ENCODE measurements at regions of chr4 and their contacts with region 1.

Region 1: DNA sequence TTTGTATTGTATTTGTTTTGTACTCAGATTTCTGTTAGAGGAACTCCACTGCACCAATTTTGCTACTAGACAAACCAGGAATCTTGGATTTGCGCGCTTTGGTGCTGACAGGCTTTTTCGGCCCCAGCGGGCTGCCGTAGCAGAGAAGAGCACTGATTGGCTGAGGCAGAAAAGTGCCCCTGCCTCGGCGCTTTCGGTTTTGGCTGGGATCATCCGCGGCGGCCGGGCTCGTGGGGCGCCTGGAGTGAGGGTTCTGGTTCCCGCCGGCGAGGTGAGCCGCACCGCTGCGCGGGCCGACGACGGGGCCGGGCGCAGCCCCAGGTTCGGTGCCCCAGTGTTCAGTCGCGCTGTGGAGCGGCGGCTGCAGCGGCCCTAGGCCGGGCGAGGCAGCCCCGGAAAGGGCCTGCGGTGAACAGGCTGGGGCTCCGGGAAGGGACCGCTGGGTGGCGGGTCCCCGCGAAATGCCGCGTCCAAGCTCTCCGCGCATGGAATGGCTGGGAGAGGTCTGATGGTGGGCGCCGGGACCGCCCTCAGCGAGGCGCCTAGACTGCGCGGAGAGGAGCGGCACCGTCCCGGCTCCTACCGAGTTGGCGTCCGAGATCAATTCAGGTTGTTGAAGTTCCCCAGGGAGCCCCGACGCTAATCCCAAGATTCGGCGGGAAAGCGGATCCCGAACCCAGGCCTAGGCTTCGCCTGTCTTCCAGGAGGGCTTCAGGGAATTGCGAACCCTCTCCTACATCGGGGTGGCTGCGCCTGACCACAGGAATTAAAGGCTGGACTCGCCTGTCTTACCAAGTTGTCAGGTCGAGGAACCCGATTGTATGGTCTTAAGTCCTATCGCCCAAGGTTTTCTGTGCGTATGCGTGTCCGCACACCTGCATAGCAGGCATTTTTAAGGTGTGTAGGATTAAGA is at the start of gene LSM6:
- DNase-seq: peak; percentile 92 to 94
- ATAC-seq: peak; percentile 96
- H3K4me3 ChIP-seq: peak within 1 kb of the TSS; percentile 70 to 84
- H3K27ac ChIP-seq: peak within 1 kb of the TSS; percentile 45 to 65
- H3K4me1 ChIP-seq: peaks cover 2 to 9% of the 10 kb centered on the region in 2 donors
- H3K27me3 ChIP-seq: no peaks in the 10 kb centered on the region
- total RNA-seq, gene LSM6: 19.9 to 25.8 TPM

Region 2: GRCh38 chr4:145840162-145840768 is 335.5 kb before region 1 on chr4:
- intact Hi-C with region 1: loop called in 1 of 2 experiments (anchors 10 kb)
- DNase-seq: no peak
- ATAC-seq: no peak
- H3K4me3 ChIP-seq: no peak overlapping the region
- H3K27ac ChIP-seq: no peak overlapping the region
- H3K4me1 ChIP-seq: peaks cover 0 to 2% of the 10 kb centered on the region in 2 donors
- H3K27me3 ChIP-seq: no peaks in the 10 kb centered on the region

Region 3: DNA sequence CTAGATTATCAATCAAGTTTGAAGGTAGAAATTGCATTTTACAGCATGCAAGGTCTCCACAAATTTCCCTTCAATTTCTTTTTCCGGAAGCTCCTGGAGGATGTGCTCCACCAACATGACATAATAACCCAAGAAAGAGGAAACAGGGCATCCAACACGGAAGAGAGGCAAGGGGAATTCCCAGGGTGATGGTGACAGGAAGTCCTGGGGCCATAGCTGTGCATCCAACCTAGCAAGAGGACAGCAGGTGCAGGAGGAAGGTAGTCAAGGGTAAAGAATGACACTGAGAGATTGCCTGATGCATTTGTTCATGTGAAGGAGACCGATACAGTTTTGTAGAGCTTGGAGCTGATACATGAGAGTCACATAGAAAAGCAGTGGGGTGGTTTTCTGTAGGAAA is 115.9 kb before region 1 on chr4:
- intact Hi-C with region 1: loop called in 1 of 2 experiments (anchors 10 kb)
- DNase-seq: peak in 1 of 2 donors; percentile 44
- ATAC-seq: no peak
- H3K4me3 ChIP-seq: no peak overlapping the region
- H3K27ac ChIP-seq: no peak overlapping the region
- H3K4me1 ChIP-seq: peaks cover 0 to 1% of the 10 kb centered on the region in 2 donors
- H3K27me3 ChIP-seq: peaks cover 0 to 2% of the 10 kb centered on the region in 2 donors

Region 4: DNA sequence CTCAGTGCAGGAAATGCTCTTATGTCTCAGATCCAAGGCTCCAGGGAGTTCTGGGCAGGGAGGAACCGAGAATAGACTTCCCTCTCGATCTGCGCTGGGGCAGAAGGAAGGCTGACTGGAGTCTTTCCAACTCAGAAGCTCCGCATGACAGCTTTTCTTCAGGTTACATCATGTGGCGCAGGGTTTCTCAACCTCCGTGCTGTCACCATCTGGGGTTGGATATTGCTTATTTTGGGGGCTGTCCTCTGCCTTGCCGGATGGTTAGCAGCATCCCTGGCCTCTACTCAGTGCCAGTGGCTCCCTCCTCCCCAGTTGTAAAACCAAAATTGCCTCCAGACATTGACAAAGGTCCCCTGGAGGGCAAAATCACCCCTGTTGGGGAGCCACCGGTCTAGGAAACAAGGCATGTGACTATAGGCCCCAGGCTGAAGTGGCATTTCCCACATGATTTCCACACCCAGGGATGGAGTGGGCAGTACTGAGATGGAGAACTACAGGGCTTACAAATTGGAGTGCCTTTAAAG is 59.9 kb after region 1 on chr4:
- intact Hi-C with region 1: no loop called
- DNase-seq: peak in 1 of 2 donors; percentile 62
- ATAC-seq: peak; percentile 51
- H3K4me3 ChIP-seq: no peak overlapping the region
- H3K27ac ChIP-seq: no peak overlapping the region
- H3K4me1 ChIP-seq: no peaks in the 10 kb centered on the region
- H3K27me3 ChIP-seq: no peaks in the 10 kb centered on the region

Region 5: GRCh38 chr4:146317783-146318182 is 142.0 kb after region 1 on chr4:
- intact Hi-C with region 1: no loop called
- DNase-seq: no peak
- ATAC-seq: no peak
- H3K4me3 ChIP-seq: no peak overlapping the region
- H3K27ac ChIP-seq: no peak overlapping the region
- H3K4me1 ChIP-seq: no peaks in the 10 kb centered on the region
- H3K27me3 ChIP-seq: no peaks in the 10 kb centered on the region

Region 6: GRCh38 chr4:146506272-146506671 is 330.5 kb after region 1 on chr4:
- intact Hi-C with region 1: no loop called
- DNase-seq: no peak
- ATAC-seq: no peak
- H3K4me3 ChIP-seq: no peak overlapping the region
- H3K27ac ChIP-seq: no peak overlapping the region
- H3K4me1 ChIP-seq: no peaks in the 10 kb centered on the region
- H3K27me3 ChIP-seq: no peaks in the 10 kb centered on the region